IMR-90 (cell line): ENCODE measurements at regions of chr7 and their contacts with region 1.

Region 1: GRCh38 chr7:137006293-137006692 is 137.8 kb downstream of the CHRM2 start:
- DNase-seq: peak; percentile 87
- ATAC-seq: peak; percentile 30
- H3K4me3 ChIP-seq: no peak overlapping the region; the same call in 1 of the 2 replicates
- H3K27ac ChIP-seq: peak overlapping the region; percentile 3; the same call in 1 of the 2 replicates
- H3K4me1 ChIP-seq: peaks cover 23% of the 10 kb centered on the region
- H3K27me3 ChIP-seq: no peaks in the 10 kb centered on the region
- CTCF ChIP-seq: no peak
- POLR2A ChIP-seq: no peak
- RAD21 ChIP-seq: no peak

Region 2: DNA sequence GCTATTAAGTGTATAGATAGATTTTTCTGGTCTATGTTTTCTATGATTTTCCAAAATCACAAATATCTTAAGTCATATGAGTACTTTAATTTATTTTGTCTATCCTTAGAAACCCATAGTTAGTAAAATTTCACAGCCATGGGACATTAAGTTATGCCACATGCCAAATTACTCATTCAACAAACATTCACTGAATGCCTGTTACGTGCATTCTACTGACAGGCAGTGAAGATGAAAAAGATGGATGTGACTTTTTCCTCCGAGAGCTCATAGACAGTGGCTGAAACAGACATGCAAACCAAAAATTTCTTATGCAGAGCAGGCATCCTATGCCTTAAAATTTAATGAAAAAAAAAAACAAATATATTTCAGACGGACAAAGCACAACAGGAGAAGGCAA is 52.9 kb before region 1 on chr7:
- CTCF ChIA-PET with region 1: no interaction called
- POLR2A ChIA-PET with region 1: no interaction called
- dilution Hi-C with region 1: no loop called
- in situ Hi-C with region 1: no loop called
- intact Hi-C with region 1: no loop called
- DNase-seq: peak; percentile 79
- ATAC-seq: peak; percentile 22
- H3K4me3 ChIP-seq: no peak overlapping the region
- H3K27ac ChIP-seq: peak overlapping the region; percentile 86
- H3K4me1 ChIP-seq: peaks cover 25% of the 10 kb centered on the region
- H3K27me3 ChIP-seq: no peaks in the 10 kb centered on the region
- CTCF ChIP-seq: no peak
- POLR2A ChIP-seq: no peak
- RAD21 ChIP-seq: no peak

Region 3: GRCh38 chr7:137074386-137075030 is 68.2 kb after region 1 on chr7:
- CTCF ChIA-PET with region 1: interaction called, 3 read pairs
- POLR2A ChIA-PET with region 1: no interaction called
- dilution Hi-C with region 1: no loop called
- in situ Hi-C with region 1: no loop called
- intact Hi-C with region 1: loop called (anchors 5 kb)
- DNase-seq: peak; percentile 87
- ATAC-seq: peak; percentile 77
- H3K4me3 ChIP-seq: peak overlapping the region; percentile 46; the same call in 1 of the 2 replicates
- H3K27ac ChIP-seq: peak overlapping the region; percentile 100
- H3K4me1 ChIP-seq: peaks cover 18% of the 10 kb centered on the region
- H3K27me3 ChIP-seq: no peaks in the 10 kb centered on the region
- CTCF ChIP-seq: no peak
- POLR2A ChIP-seq: no peak
- RAD21 ChIP-seq: no peak

Region 4: GRCh38 chr7:137343281-137343841 is 337.1 kb after region 1 on chr7 and contains the start of gene PTN:
- CTCF ChIA-PET with region 1: no interaction called
- POLR2A ChIA-PET with region 1: no interaction called
- dilution Hi-C with region 1: no loop called
- in situ Hi-C with region 1: no loop called
- intact Hi-C with region 1: loop called (anchors 10 kb)
- DNase-seq: peak; percentile 79
- ATAC-seq: peak; percentile 93
- H3K4me3 ChIP-seq: peak within 1 kb of the TSS; percentile 79
- H3K27ac ChIP-seq: peak within 1 kb of the TSS; percentile 63
- H3K4me1 ChIP-seq: no peaks in the 10 kb centered on the region; the same call in 1 of the 2 replicates
- H3K27me3 ChIP-seq: no peaks in the 10 kb centered on the region
- CTCF ChIP-seq: no peak
- POLR2A ChIP-seq: no peak
- RAD21 ChIP-seq: no peak; the same call in 1 of the 2 replicates
- total RNA-seq, gene PTN: 61.7 and 86.7 TPM in 2 replicates